T-cell (primary cell): ENCODE measurements at regions of chr19 and their contacts with region 1.

Region 1: DNA sequence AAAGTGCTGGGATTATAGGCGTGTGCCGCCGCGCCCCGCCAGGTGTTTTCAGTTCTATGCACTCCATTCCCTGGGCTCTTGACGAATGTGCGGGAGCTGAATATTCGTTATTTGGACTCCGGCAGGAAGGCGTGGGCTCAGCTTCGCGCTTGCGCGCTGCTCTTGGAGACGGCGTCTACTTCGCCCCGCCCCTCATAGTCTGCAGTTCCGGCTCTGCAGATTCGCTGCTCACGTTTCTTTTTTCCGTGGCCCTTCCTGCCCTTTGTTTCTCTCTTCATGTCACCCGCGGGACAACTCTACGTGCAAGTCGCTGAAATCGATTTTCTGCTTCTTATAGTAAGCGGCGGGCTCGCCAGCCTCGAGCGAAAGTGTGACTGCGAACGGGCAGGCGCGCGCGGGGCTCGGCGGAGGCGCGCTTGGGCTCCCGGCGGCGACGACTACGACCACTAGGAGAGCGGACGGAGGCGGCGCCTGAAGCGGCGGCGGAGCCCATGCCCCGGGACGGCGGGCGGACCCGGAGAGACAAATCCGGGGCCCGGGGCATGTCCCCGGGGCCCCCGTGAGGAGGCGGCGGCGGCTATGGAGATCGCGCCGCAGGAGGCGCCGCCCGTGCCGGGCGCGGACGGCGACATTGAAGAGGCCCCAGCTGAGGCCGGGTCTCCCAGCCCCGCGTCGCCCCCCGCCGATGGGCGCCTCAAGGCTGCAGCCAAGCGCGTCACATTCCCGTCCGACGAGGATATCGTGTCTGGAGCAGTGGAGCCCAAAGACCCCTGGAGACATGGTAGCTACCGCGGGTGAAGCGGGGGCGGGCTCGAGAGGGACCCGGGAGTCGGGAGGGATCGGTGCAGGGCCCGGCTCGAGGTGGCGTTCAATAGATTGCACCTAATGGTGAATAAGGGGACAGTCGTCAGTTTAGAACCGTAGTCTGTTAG is at the start of gene PPP1R37:
- DNase-seq: peak; percentile 81 to 96 (median 90)
- ATAC-seq: peak; percentile 74 to 83 (median 80)
- H3K4me3 ChIP-seq: peak within 1 kb of the TSS; percentile 76 to 94
- H3K4me3 Mint-ChIP-seq: peak within 1 kb of the TSS; percentile 93 to 98 (median 96)
- H3K27ac ChIP-seq: peak within 1 kb of the TSS; percentile 85
- H3K27ac Mint-ChIP-seq: peak within 1 kb of the TSS; percentile 97 to 99
- H3K4me1 ChIP-seq: peaks cover 28 to 91% of the 10 kb centered on the region in 2 experiments
- H3K4me1 Mint-ChIP-seq: peaks cover 74 to 78% (median 74%) of the 10 kb centered on the region in 3 donors
- H3K27me3 ChIP-seq: peaks cover 0 to 2% of the 10 kb centered on the region in 2 experiments
- H3K27me3 Mint-ChIP-seq: no peaks in the 10 kb centered on the region
- total RNA-seq, gene PPP1R37: 17.2 to 35.2 (median 30.4) TPM

Region 2: DNA sequence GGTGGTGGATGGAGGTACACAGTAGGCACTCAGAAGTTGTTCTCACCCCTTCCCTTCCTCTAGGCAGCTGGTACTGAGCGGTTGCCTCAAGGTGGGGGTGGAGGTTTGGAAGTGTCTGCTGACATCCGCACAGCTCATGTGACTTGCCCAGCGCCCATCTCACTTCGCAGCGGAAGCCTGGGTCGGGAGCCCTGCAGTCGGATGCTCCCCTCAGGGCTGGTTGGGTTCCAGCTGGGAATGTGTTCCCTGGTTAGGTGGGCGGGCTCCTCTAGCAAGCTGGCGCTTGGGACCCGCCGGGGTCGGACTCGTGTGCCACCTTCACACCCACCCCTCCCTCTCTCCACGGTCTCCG is 10.1 kb after region 1 on chr19:
- CTCF ChIA-PET with region 1: interaction called, 4 to 16 read pairs
- POLR2A ChIA-PET with region 1: no interaction called
- DNase-seq: peak in 34 of 35 experiments; percentile 15 to 73 (median 44)
- ATAC-seq: peak; percentile 80 to 95 (median 88)
- H3K4me3 ChIP-seq: peak overlapping the region; percentile 41 to 46
- H3K4me3 Mint-ChIP-seq: peak overlapping the region; percentile 66 to 70 (median 69)
- H3K27ac ChIP-seq: peak overlapping the region; percentile 54
- H3K27ac Mint-ChIP-seq: peak overlapping the region; percentile 61 to 85
- H3K4me1 ChIP-seq: peaks cover 22 to 59% of the 10 kb centered on the region in 2 experiments
- H3K4me1 Mint-ChIP-seq: peaks cover 68 to 74% (median 69%) of the 10 kb centered on the region in 3 donors
- H3K27me3 ChIP-seq: no peaks in the 10 kb centered on the region
- H3K27me3 Mint-ChIP-seq: no peaks in the 10 kb centered on the region

Region 3: GRCh38 chr19:45178262-45179071 is 85.5 kb after region 1 on chr19 and contains the start of gene BLOC1S3:
- CTCF ChIA-PET with region 1: interaction called in 1 of 2 experiments, 11 read pairs
- POLR2A ChIA-PET with region 1: no interaction called
- DNase-seq: peak; percentile 99 to 100 (median 100)
- ATAC-seq: peak; percentile 84 to 91 (median 86)
- H3K4me3 ChIP-seq: peak within 1 kb of the TSS; percentile 78 to 79
- H3K4me3 Mint-ChIP-seq: peak within 1 kb of the TSS; percentile 81 to 91 (median 87)
- H3K27ac ChIP-seq: peak within 1 kb of the TSS; percentile 73
- H3K27ac Mint-ChIP-seq: peak within 1 kb of the TSS; percentile 91 to 98
- H3K4me1 ChIP-seq: peaks cover 8 to 51% of the 10 kb centered on the region in 2 experiments
- H3K4me1 Mint-ChIP-seq: peaks cover 48 to 53% (median 51%) of the 10 kb centered on the region in 3 donors
- H3K27me3 ChIP-seq: no peaks in the 10 kb centered on the region
- H3K27me3 Mint-ChIP-seq: no peaks in the 10 kb centered on the region
- total RNA-seq, gene BLOC1S3: 14.9 to 36.2 (median 32.8) TPM